HepG2 (cell line): ENCODE measurements at regions of chr9 and their contacts with region 1.

Region 1: GRCh38 chr9:6986141-6986815 is 228.5 kb downstream of the KDM4C start:
- DNase-seq: peak; percentile 57
- ATAC-seq: peak; percentile 90
- H3K4me3 ChIP-seq: no peak overlapping the region
- H3K27ac ChIP-seq: no peak overlapping the region
- H3K4me1 ChIP-seq: peaks cover 9% of the 10 kb centered on the region
- H3K27me3 ChIP-seq: no peaks in the 10 kb centered on the region
- CTCF ChIP-seq: no peak
- EP300 ChIP-seq: no peak
- POLR2A ChIP-seq: no peak
- RAD21 ChIP-seq: no peak

Region 2: DNA sequence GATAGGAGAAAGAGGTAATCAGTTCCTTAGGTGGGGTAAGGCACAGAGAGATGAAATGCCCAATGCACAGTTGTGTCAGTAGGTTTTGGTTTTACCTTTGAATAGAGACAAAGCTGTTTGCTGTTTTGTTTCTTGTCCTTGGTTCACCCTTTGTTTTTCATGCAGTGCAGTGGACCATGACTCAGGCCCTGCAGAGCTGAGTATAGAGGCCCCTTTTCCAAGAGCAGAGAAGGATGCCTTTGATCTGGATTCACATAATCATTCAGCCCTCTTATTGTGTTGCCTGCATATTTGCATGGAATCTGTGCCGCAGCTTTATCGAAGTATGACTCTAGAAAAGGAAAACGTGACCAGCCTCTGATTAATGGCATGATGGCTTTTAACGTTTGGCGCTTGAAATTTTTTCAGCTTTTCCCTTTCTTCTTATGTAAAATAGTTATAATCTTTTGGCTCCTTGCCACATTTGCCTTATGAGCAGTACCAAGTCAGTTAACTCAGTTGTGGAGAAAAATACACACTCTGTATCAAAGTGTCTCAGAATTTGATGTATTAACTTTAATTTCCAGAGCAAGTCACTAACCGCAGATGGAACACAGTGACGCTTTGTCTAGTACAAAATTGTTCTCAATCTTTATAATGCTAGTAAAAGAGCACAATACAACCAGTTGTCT is 30.9 kb before region 1 on chr9:
- CTCF ChIA-PET with region 1: no interaction called
- POLR2A ChIA-PET with region 1: no interaction called
- in situ Hi-C with region 1: no loop called
- intact Hi-C with region 1: loop called (anchors 2 kb)
- DNase-seq: peak; percentile 95
- ATAC-seq: peak; percentile 100
- H3K4me3 ChIP-seq: no peak overlapping the region; a peak in 1 of 6 replicates
- H3K27ac ChIP-seq: peak overlapping the region; percentile 89
- H3K4me1 ChIP-seq: peaks cover 36% of the 10 kb centered on the region
- H3K27me3 ChIP-seq: no peaks in the 10 kb centered on the region
- CTCF ChIP-seq: no peak
- EP300 ChIP-seq: peak; percentile 37 to 74; a peak in 2 of 4 replicates
- POLR2A ChIP-seq: no peak
- RAD21 ChIP-seq: no peak

Region 3: DNA sequence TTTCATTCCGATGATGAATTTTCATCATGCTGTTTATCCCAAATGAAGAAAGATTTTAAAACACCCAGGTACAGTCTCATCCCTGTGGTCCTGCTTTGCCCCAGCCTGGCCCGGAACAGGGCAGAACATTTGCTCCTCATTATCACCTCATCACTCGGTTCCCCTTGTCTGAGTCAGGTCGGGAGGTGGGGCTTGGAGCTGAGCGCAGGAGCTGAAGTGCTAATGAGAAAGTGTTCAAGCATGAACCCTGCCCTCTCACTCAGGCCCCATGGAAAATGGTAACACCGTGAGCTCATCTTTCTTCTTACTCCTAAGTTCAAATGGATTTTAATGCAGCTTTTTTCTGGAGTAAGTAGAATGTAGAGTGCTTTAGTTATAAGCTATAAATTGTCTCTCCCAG is 237.7 kb after region 1 on chr9:
- CTCF ChIA-PET with region 1: no interaction called
- POLR2A ChIA-PET with region 1: no interaction called
- in situ Hi-C with region 1: no loop called
- intact Hi-C with region 1: no loop called
- DNase-seq: no peak
- ATAC-seq: no peak
- H3K4me3 ChIP-seq: no peak overlapping the region
- H3K27ac ChIP-seq: no peak overlapping the region
- H3K4me1 ChIP-seq: no peaks in the 10 kb centered on the region
- H3K27me3 ChIP-seq: peaks cover 0 to 8% of the 10 kb centered on the region in 2 experiments; a peak in 2 of 5 replicates
- CTCF ChIP-seq: no peak
- EP300 ChIP-seq: no peak
- POLR2A ChIP-seq: no peak
- RAD21 ChIP-seq: no peak